Calu3 (cell line): ENCODE measurements at regions of chr7 and their contacts with region 1.

Region 1: GRCh38 chr7:105399043-105399725 is 10.5 kb upstream of the SRPK2 start:
- DNase-seq: no peak
- H3K4me3 Mint-ChIP-seq: no peak overlapping the region
- H3K27ac Mint-ChIP-seq: no peak overlapping the region
- H3K4me1 Mint-ChIP-seq: no peaks in the 10 kb centered on the region
- H3K27me3 Mint-ChIP-seq: no peaks in the 10 kb centered on the region
- CTCF ChIP-seq: peak; percentile 10

Region 2: GRCh38 chr7:105439174-105439893 is 40.1 kb after region 1 on chr7:
- CTCF ChIA-PET with region 1: no interaction called
- intact Hi-C with region 1: loop called (anchors 5 kb)
- DNase-seq: peak; percentile 34
- H3K4me3 Mint-ChIP-seq: peak overlapping the region; percentile 16
- H3K27ac Mint-ChIP-seq: peak overlapping the region; percentile 71
- H3K4me1 Mint-ChIP-seq: peaks cover 30% of the 10 kb centered on the region
- H3K27me3 Mint-ChIP-seq: no peaks in the 10 kb centered on the region
- CTCF ChIP-seq: no peak

Region 3: DNA sequence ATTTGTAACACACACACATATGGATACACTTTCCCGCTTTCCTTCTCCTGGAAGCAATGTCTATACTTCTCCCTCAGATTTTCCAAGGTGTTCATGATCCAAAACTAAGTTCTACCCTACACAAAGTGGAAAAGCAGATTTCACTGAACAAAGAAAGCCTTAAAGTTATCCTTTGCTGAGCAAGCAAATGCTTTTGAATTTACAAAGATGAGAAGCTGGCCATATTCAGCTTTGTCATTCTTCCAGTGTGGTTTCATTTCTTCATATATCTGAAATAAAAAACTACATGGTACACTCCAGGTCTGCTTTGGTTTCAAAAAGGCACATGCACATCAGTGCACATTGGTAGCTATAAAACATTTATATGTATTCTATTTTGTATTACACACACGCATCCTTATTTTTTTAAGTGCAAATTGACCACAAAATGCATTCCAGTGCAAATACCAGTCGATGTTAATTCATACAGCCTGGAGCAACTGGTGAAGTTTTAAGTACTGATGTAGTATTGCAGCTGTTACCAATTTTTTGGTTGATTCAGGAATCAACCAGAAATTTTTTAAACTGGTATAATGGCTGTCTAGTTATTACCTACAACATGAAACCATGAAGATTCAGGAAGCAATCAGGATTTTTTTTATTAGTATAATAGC is 55.0 kb after region 1 on chr7:
- CTCF ChIA-PET with region 1: no interaction called
- intact Hi-C with region 1: no loop called
- DNase-seq: no peak
- H3K4me3 Mint-ChIP-seq: no peak overlapping the region
- H3K27ac Mint-ChIP-seq: no peak overlapping the region
- H3K4me1 Mint-ChIP-seq: no peaks in the 10 kb centered on the region
- H3K27me3 Mint-ChIP-seq: no peaks in the 10 kb centered on the region
- CTCF ChIP-seq: no peak

Region 4: GRCh38 chr7:105487579-105488571 is 88.7 kb after region 1 on chr7:
- CTCF ChIA-PET with region 1: no interaction called
- intact Hi-C with region 1: loop called (anchors 1 kb)
- DNase-seq: peak; percentile 2
- H3K4me3 Mint-ChIP-seq: no peak overlapping the region
- H3K27ac Mint-ChIP-seq: no peak overlapping the region
- H3K4me1 Mint-ChIP-seq: peaks cover 8% of the 10 kb centered on the region
- H3K27me3 Mint-ChIP-seq: no peaks in the 10 kb centered on the region
- CTCF ChIP-seq: no peak